ENCODE measurements at regions of chr16 and their contacts with region 1.

Region 1: DNA sequence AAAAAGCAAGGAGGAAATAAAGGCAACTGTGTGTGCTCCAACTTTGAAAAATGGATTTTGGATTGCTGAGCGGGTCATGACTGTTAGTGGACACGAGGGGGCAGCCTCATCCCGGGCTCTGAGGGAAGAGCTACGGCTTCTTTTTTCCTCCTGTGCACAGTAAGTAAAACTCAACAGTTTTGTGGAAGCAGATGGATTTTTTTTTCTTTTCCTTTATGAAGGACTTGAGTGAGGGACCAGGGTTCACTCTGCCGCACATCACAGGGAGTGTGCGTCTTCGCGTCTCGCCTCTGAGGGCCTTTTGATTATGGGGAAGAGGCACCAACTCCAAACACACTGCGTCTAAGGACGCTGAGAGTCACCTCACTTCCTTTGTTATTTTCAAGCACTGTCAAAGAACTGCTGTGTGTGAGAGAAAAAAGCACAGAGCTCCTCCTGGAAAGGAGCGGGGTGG is 80.3 kb upstream of the GOT2 start:
- DNase-seq: no peak
- ATAC-seq: peak; percentile 87
- H3K4me3 ChIP-seq: no peak overlapping the region
- H3K27ac ChIP-seq: no peak overlapping the region
- H3K4me1 ChIP-seq: no peaks in the 10 kb centered on the region
- H3K27me3 ChIP-seq: no peaks in the 10 kb centered on the region
- CTCF ChIP-seq: peak; percentile 85 to 88 (median 88)
- EP300 ChIP-seq: no peak
- POLR2A ChIP-seq: no peak
- RAD21 ChIP-seq: peak; percentile 88

Region 2: DNA sequence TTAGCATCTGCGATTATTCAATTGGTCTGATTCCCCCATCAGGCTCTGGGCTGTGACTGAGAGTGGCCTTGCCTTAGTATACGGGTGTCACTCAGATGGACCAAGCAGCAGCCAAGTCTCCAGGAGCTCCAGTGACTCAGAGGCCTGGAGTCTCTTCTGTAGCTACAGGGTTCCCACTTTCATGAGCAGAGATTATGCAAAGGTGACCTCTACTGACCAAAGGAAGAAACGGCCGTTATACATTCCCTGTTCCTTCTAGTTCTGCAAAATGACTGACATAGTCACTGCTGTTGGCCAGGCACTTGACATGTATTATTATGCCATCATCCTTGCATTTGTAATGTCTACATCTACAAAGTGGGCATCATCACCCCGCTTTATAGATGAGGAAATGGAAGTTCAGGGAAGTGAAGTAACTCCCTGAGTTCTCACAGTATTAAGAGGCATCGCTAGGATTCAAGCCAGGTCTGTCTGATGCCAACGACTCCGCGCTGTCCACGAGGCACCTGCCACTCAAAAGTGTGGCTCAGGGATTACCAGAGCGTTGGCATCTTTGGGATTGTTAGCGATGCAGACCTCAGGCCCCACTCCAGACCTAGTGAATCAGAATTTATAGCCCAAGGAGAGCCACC is 153.1 kb before region 1 on chr16:
- CTCF ChIA-PET with region 1: no interaction called
- POLR2A ChIA-PET with region 1: no interaction called
- RAD21 ChIA-PET with region 1: no interaction called
- SMC1A ChIA-PET with region 1: no interaction called
- in situ Hi-C with region 1: no loop called
- intact Hi-C with region 1: no loop called
- DNase-seq: no peak
- ATAC-seq: peak; percentile 96
- H3K4me3 ChIP-seq: no peak overlapping the region
- H3K27ac ChIP-seq: no peak overlapping the region
- H3K4me1 ChIP-seq: no peaks in the 10 kb centered on the region
- H3K27me3 ChIP-seq: no peaks in the 10 kb centered on the region
- CTCF ChIP-seq: peak; percentile 57 to 90 (median 70); a peak in 5 of 6 replicates
- EP300 ChIP-seq: no peak
- POLR2A ChIP-seq: no peak
- RAD21 ChIP-seq: peak; percentile 86

Region 3: GRCh38 chr16:58828901-58829545 is 14.6 kb after region 1 on chr16:
- CTCF ChIA-PET with region 1: interaction called, 11 read pairs
- POLR2A ChIA-PET with region 1: interaction called, 3 read pairs
- RAD21 ChIA-PET with region 1: interaction called, 8 read pairs
- SMC1A ChIA-PET with region 1: interaction called, 4 read pairs
- in situ Hi-C with region 1: no loop called
- intact Hi-C with region 1: no loop called
- DNase-seq: no peak
- ATAC-seq: no peak
- H3K4me3 ChIP-seq: no peak overlapping the region
- H3K27ac ChIP-seq: no peak overlapping the region
- H3K4me1 ChIP-seq: no peaks in the 10 kb centered on the region
- H3K27me3 ChIP-seq: no peaks in the 10 kb centered on the region
- CTCF ChIP-seq: no peak
- EP300 ChIP-seq: no peak
- POLR2A ChIP-seq: no peak
- RAD21 ChIP-seq: no peak

Region 4: GRCh38 chr16:60203525-60204124 is 1389.2 kb after region 1 on chr16:
- CTCF ChIA-PET with region 1: interaction called, 3 read pairs
- POLR2A ChIA-PET with region 1: no interaction called
- RAD21 ChIA-PET with region 1: no interaction called
- SMC1A ChIA-PET with region 1: interaction called, 4 read pairs
- in situ Hi-C with region 1: no loop called
- intact Hi-C with region 1: loop called (anchors 5 kb)
- DNase-seq: no peak
- ATAC-seq: no peak
- H3K4me3 ChIP-seq: no peak overlapping the region
- H3K27ac ChIP-seq: no peak overlapping the region
- H3K4me1 ChIP-seq: no peaks in the 10 kb centered on the region
- H3K27me3 ChIP-seq: no peaks in the 10 kb centered on the region
- CTCF ChIP-seq: peak in 1 of 3 experiments; percentile 20; a peak in 1 of 6 replicates
- EP300 ChIP-seq: no peak
- POLR2A ChIP-seq: no peak
- RAD21 ChIP-seq: no peak